ENCODE measurements at regions of chr10 and their contacts with region 1.

Region 1: GRCh38 chr10:60434418-60435046 is 44.9 kb upstream of the ANK3 start:
- DNase-seq: peak; percentile 55 to 76
- H3K4me3 ChIP-seq: no peak overlapping the region
- H3K4me3 Mint-ChIP-seq: no peak overlapping the region
- H3K27ac Mint-ChIP-seq: no peak overlapping the region
- H3K4me1 ChIP-seq: no peaks in the 10 kb centered on the region
- H3K4me1 Mint-ChIP-seq: no peaks in the 10 kb centered on the region
- H3K27me3 ChIP-seq: no peaks in the 10 kb centered on the region
- H3K27me3 Mint-ChIP-seq: no peaks in the 10 kb centered on the region
- CTCF ChIP-seq: peak; percentile 84 to 90

Region 2: DNA sequence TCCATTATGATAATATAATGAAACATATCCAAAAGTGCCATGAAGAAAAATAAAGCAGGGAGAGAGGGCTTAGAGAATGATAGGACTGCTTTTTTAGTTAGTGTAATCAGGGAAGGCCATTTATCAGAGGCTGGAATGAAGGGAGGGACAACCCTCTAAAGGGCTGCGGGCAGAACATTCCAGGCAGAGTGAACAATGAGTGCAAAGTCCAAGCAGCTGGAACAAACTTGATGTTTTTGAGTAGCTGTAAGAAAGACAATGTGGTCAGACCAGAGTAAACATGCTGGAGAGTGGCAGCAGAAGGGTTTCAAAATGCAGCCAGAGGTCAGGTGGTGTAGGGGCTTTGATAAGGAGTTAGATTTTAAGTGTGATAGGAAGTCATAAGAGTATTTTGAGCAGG is 462.6 kb before region 1 on chr10:
- CTCF ChIA-PET with region 1: no interaction called
- POLR2A ChIA-PET with region 1: no interaction called
- intact Hi-C with region 1: no loop called
- DNase-seq: peak; percentile 93 to 95
- H3K4me3 ChIP-seq: no peak overlapping the region
- H3K4me3 Mint-ChIP-seq: no peak overlapping the region
- H3K27ac Mint-ChIP-seq: no peak overlapping the region
- H3K4me1 ChIP-seq: peaks cover 40% of the 10 kb centered on the region
- H3K4me1 Mint-ChIP-seq: peaks cover 26% of the 10 kb centered on the region
- H3K27me3 ChIP-seq: no peaks in the 10 kb centered on the region
- H3K27me3 Mint-ChIP-seq: no peaks in the 10 kb centered on the region
- CTCF ChIP-seq: no peak

Region 3: DNA sequence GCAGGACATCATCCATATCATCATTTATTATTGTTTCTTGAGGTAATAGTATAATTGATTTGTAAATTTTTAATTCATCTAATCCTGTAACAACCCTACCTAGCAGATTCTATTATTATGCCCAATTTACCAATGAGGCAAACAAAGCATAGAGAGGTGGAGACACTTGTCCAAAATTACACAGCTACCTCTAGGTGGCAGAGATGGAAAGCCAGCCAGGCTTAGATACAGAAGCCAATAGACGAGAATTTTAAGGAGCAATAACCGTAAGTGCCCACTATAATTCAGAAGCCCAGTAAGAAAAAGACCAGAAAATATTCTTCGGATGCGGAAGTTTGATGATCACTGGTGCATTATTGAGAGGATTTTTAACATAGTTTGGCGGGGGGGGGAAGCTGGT is 98.8 kb before region 1 on chr10:
- CTCF ChIA-PET with region 1: interaction called, 3 read pairs
- POLR2A ChIA-PET with region 1: no interaction called
- intact Hi-C with region 1: loop called (anchors 1 kb)
- DNase-seq: peak in 1 of 2 experiments; percentile 40
- H3K4me3 ChIP-seq: no peak overlapping the region
- H3K4me3 Mint-ChIP-seq: no peak overlapping the region
- H3K27ac Mint-ChIP-seq: no peak overlapping the region
- H3K4me1 ChIP-seq: 0 out of 2 replicates have a peak, but pooled peaks cover 5% of the 10 kb centered on the region
- H3K4me1 Mint-ChIP-seq: peaks cover 16% of the 10 kb centered on the region
- H3K27me3 ChIP-seq: no peaks in the 10 kb centered on the region
- H3K27me3 Mint-ChIP-seq: no peaks in the 10 kb centered on the region
- CTCF ChIP-seq: peak; percentile 62 to 70

Region 4: DNA sequence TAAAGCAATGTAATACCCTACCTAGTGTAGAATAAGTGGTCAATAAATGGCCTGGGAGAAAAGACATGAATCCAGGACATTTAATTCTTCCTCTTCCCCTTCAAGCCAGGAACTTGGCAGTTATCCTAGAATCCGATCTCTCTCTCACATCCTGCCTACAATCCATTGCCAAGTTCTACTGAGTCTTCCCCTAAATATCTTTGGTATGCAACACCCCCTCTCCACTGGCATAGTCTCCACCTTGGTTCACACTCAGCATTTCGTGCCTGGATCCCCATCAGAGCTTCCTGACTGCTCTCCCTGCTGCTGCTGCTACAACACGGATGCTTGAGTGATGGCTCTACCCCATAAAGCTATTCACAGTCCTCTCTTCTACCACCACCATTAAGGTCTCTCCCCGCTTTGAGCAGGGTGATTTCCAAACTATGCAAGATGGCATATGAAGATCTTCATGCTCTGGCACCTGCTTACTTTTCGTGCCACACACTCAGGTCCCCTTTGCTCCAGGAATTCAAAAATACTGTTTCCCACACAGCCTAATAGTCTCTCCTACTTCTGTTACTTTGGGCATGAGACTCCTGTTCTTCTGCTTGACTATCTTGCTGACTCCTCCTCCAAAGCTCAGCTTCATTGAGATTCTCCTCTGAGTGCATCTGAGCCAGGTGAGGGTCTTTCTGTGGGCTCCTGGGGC is 49.7 kb before region 1 on chr10:
- CTCF ChIA-PET with region 1: no interaction called
- POLR2A ChIA-PET with region 1: no interaction called
- intact Hi-C with region 1: no loop called
- DNase-seq: no peak
- H3K4me3 ChIP-seq: no peak overlapping the region
- H3K4me3 Mint-ChIP-seq: no peak overlapping the region
- H3K27ac Mint-ChIP-seq: no peak overlapping the region
- H3K4me1 ChIP-seq: no peaks in the 10 kb centered on the region
- H3K4me1 Mint-ChIP-seq: peaks cover 7% of the 10 kb centered on the region
- H3K27me3 ChIP-seq: no peaks in the 10 kb centered on the region
- H3K27me3 Mint-ChIP-seq: no peaks in the 10 kb centered on the region
- CTCF ChIP-seq: no peak

Region 5: DNA sequence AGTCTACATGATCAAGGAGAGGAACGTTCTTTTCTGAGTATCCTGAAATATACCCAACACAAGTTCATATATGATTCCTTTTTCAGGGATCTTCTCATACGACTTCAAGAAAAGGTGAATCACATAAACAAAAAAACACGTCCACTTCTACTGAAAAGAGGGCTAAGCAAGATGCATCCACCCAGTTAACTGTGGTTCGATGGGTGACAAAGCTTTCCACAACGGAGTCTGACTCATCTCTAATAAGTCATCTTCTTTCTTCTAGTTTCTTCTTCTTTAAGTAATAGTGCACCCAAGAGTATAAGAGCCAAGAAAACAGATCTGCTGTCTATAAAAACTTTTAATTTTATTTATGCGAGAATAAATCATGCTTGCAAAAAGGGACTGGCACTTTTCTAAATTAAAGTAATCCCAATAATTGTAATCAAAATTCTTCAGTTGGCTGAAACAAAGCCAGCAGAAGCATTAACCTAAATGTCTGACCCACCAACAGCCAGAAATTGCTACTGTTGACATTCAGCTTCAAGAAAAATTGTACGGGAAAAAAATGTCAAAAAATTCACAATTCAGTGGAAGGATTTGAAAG is 102.1 kb after region 1 on chr10:
- CTCF ChIA-PET with region 1: no interaction called
- POLR2A ChIA-PET with region 1: no interaction called
- intact Hi-C with region 1: no loop called
- DNase-seq: no peak
- H3K4me3 ChIP-seq: no peak overlapping the region
- H3K4me3 Mint-ChIP-seq: no peak overlapping the region
- H3K27ac Mint-ChIP-seq: no peak overlapping the region
- H3K4me1 ChIP-seq: no peaks in the 10 kb centered on the region
- H3K4me1 Mint-ChIP-seq: peaks cover 6% of the 10 kb centered on the region
- H3K27me3 ChIP-seq: no peaks in the 10 kb centered on the region
- H3K27me3 Mint-ChIP-seq: no peaks in the 10 kb centered on the region
- CTCF ChIP-seq: no peak

Region 6: DNA sequence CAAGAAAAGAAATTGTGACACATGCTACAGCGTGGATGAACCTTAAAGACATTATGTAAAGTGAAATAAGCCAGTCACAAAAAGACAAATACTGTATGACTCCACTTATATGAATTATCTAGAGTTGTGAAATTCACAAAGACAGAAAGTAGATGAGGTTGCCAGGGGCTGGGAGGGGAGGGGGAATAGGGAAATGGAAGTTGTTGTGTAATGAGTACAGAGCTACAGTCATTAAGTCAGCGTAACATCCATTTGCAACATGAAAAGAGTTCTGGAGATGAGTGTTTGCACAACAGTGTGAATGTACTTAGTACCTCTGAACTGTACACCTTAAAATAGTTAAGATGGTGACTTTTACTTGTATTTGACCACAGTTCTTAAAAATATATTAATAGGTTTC is 231.7 kb after region 1 on chr10:
- CTCF ChIA-PET with region 1: no interaction called
- POLR2A ChIA-PET with region 1: no interaction called
- intact Hi-C with region 1: no loop called
- DNase-seq: no peak
- H3K4me3 ChIP-seq: no peak overlapping the region
- H3K4me3 Mint-ChIP-seq: no peak overlapping the region
- H3K27ac Mint-ChIP-seq: no peak overlapping the region
- H3K4me1 ChIP-seq: peaks cover 12% of the 10 kb centered on the region; the same call in 1 of the 2 replicates
- H3K4me1 Mint-ChIP-seq: peaks cover 7% of the 10 kb centered on the region
- H3K27me3 ChIP-seq: no peaks in the 10 kb centered on the region
- H3K27me3 Mint-ChIP-seq: no peaks in the 10 kb centered on the region
- CTCF ChIP-seq: no peak

Measured in Caco-2 (cell line).